ENCODE measurements at regions of chr6 and their contacts with region 1.

Region 1: GRCh38 chr6:155909710-155910109 is 454.1 kb upstream of the NOX3 start:
- DNase-seq: no peak
- H3K4me3 ChIP-seq: no peak overlapping the region
- H3K27ac ChIP-seq: no peak overlapping the region
- H3K4me1 ChIP-seq: no peaks in the 10 kb centered on the region
- H3K27me3 ChIP-seq: no peaks in the 10 kb centered on the region
- CTCF ChIP-seq: no peak

Region 2: GRCh38 chr6:156336089-156336488 is 426.4 kb after region 1 on chr6:
- dilution Hi-C with region 1: loop called (anchors 10 kb)
- DNase-seq: no peak
- H3K4me3 ChIP-seq: no peak overlapping the region
- H3K27ac ChIP-seq: no peak overlapping the region
- H3K4me1 ChIP-seq: no peaks in the 10 kb centered on the region
- H3K27me3 ChIP-seq: no peaks in the 10 kb centered on the region
- CTCF ChIP-seq: no peak

Measured in keratinocyte (primary cell).